B cell (primary cell): ENCODE measurements at regions of chr17 and their contacts with region 1.

Region 1: DNA sequence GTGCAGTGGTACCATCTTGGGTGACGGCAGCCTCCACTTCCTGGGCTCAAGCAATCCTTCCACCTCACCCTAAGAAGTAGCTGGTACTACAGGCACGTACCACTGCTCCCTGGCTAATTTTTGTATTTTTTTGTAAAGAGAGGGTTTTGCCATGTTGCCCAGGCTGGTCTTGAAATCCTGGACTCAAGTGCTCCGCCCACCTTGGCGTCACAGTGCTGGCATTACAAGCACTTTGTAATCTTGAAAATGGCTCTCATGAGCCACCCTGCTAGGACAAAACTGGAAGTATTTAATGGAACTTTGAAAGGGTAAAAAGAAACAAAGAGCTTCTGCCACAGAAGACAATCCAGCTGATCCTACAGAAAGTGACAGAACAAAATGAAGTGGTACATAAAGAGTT is 9.2 kb downstream of the SUMO2 start:
- DNase-seq: no peak
- ATAC-seq: no peak
- H3K4me3 ChIP-seq: no peak overlapping the region
- H3K4me3 Mint-ChIP-seq: no peak overlapping the region
- H3K27ac ChIP-seq: no peak overlapping the region
- H3K27ac Mint-ChIP-seq: no peak overlapping the region
- H3K4me1 ChIP-seq: peaks cover 6 to 8% of the 10 kb centered on the region in 2 donors
- H3K4me1 Mint-ChIP-seq: peaks cover 13% of the 10 kb centered on the region
- H3K27me3 ChIP-seq: no peaks in the 10 kb centered on the region
- H3K27me3 Mint-ChIP-seq: no peaks in the 10 kb centered on the region
- CTCF ChIP-seq: no peak

Region 2: GRCh38 chr17:75096082-75096625 is 77.4 kb before region 1 on chr17:
- CTCF ChIA-PET with region 1: no interaction called
- POLR2A ChIA-PET with region 1: no interaction called
- intact Hi-C with region 1: no loop called
- DNase-seq: no peak
- ATAC-seq: no peak
- H3K4me3 ChIP-seq: no peak overlapping the region
- H3K4me3 Mint-ChIP-seq: no peak overlapping the region
- H3K27ac ChIP-seq: no peak overlapping the region
- H3K27ac Mint-ChIP-seq: no peak overlapping the region
- H3K4me1 ChIP-seq: no peaks in the 10 kb centered on the region
- H3K4me1 Mint-ChIP-seq: peaks cover 2% of the 10 kb centered on the region
- H3K27me3 ChIP-seq: no peaks in the 10 kb centered on the region
- H3K27me3 Mint-ChIP-seq: no peaks in the 10 kb centered on the region
- CTCF ChIP-seq: no peak

Region 3: GRCh38 chr17:75124041-75124818 is 49.3 kb before region 1 on chr17:
- CTCF ChIA-PET with region 1: interaction called, 373 read pairs
- POLR2A ChIA-PET with region 1: interaction called, 3 read pairs
- intact Hi-C with region 1: no loop called
- DNase-seq: no peak
- ATAC-seq: peak; percentile 67
- H3K4me3 ChIP-seq: no peak overlapping the region
- H3K4me3 Mint-ChIP-seq: peak overlapping the region; percentile 5
- H3K27ac ChIP-seq: no peak overlapping the region
- H3K27ac Mint-ChIP-seq: peak overlapping the region; percentile 59
- H3K4me1 ChIP-seq: peaks cover 26 to 29% of the 10 kb centered on the region in 2 donors
- H3K4me1 Mint-ChIP-seq: peaks cover 47% of the 10 kb centered on the region
- H3K27me3 ChIP-seq: no peaks in the 10 kb centered on the region
- H3K27me3 Mint-ChIP-seq: no peaks in the 10 kb centered on the region
- CTCF ChIP-seq: no peak

Region 4: GRCh38 chr17:75131280-75132017 is 42.1 kb before region 1 on chr17 and contains the start of gene NT5C:
- CTCF ChIA-PET with region 1: interaction called, 17 read pairs
- POLR2A ChIA-PET with region 1: interaction called, 6 read pairs
- intact Hi-C with region 1: no loop called
- DNase-seq: peak; percentile 88
- ATAC-seq: peak; percentile 83
- H3K4me3 ChIP-seq: peak within 1 kb of the TSS; percentile 40 to 95 (median 87)
- H3K4me3 Mint-ChIP-seq: peak within 1 kb of the TSS; percentile 90
- H3K27ac ChIP-seq: peak within 1 kb of the TSS; percentile 64 to 85
- H3K27ac Mint-ChIP-seq: peak within 1 kb of the TSS; percentile 96
- H3K4me1 ChIP-seq: peaks cover 11 to 25% of the 10 kb centered on the region in 2 donors
- H3K4me1 Mint-ChIP-seq: peaks cover 35% of the 10 kb centered on the region
- H3K27me3 ChIP-seq: no peaks in the 10 kb centered on the region
- H3K27me3 Mint-ChIP-seq: no peaks in the 10 kb centered on the region
- CTCF ChIP-seq: peak; percentile 73
- total RNA-seq, gene NT5C: 98.9 and 103 TPM in 2 replicates

Region 5: GRCh38 chr17:75154195-75155106 is 19.1 kb before region 1 on chr17 and contains the start of gene JPT1:
- CTCF ChIA-PET with region 1: interaction called, 4 read pairs
- POLR2A ChIA-PET with region 1: interaction called, 15 read pairs
- intact Hi-C with region 1: loop called (anchors 1 kb)
- DNase-seq: peak; percentile 98
- ATAC-seq: peak; percentile 97
- H3K4me3 ChIP-seq: peak within 1 kb of the TSS; percentile 69 to 83 (median 74)
- H3K4me3 Mint-ChIP-seq: peak within 1 kb of the TSS; percentile 95
- H3K27ac ChIP-seq: peak within 1 kb of the TSS; percentile 2 to 65
- H3K27ac Mint-ChIP-seq: peak within 1 kb of the TSS; percentile 89
- H3K4me1 ChIP-seq: peaks cover 15 to 27% of the 10 kb centered on the region in 2 donors
- H3K4me1 Mint-ChIP-seq: peaks cover 30% of the 10 kb centered on the region
- H3K27me3 ChIP-seq: no peaks in the 10 kb centered on the region
- H3K27me3 Mint-ChIP-seq: no peaks in the 10 kb centered on the region
- CTCF ChIP-seq: no peak
- total RNA-seq, gene JPT1: 37.6 and 37.8 TPM in 2 replicates